ENCODE measurements at regions of chr17 and their contacts with region 1.

Region 1: DNA sequence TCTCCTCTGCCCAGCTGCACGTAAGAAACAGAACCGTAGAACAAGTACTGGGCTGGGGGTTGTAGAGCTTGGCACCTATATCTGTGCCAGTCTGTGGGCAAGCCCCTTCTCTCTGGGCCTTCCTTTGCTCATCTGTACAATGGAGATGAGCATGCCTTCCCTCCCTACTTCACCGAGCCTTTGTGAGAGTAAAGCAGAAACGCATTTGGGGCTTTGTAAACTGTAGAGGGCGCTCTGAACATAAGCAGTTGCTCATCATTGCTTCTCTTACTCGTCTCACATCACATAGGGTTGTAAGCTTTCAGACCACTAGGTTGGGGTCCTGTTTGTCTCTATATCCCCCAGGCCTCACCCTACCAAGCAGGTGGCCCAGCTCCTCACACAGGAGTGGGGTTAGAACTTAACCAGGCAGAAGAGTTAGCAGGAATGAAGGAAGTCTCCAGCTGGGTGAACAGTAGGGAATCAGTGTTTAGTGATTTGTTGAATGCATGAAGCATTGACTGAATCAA is 15.1 kb downstream of the SAMD14 start:
- DNase-seq: peak in 4 of 5 donors; percentile 30 to 50 (median 42)
- H3K4me3 ChIP-seq: no peak overlapping the region
- H3K4me3 Mint-ChIP-seq: no peak overlapping the region
- H3K27ac ChIP-seq: no peak overlapping the region
- H3K27ac Mint-ChIP-seq: peak overlapping the region in 1 of 7 donors; percentile 45
- H3K4me1 ChIP-seq: peaks cover 13% of the 10 kb centered on the region
- H3K4me1 Mint-ChIP-seq: peaks cover 7 to 16% (median 12%) of the 10 kb centered on the region in 4 donors
- H3K27me3 ChIP-seq: peaks cover 7% of the 10 kb centered on the region
- H3K27me3 Mint-ChIP-seq: peaks cover 14 to 20% of the 10 kb centered on the region in 2 donors

Region 2: DNA sequence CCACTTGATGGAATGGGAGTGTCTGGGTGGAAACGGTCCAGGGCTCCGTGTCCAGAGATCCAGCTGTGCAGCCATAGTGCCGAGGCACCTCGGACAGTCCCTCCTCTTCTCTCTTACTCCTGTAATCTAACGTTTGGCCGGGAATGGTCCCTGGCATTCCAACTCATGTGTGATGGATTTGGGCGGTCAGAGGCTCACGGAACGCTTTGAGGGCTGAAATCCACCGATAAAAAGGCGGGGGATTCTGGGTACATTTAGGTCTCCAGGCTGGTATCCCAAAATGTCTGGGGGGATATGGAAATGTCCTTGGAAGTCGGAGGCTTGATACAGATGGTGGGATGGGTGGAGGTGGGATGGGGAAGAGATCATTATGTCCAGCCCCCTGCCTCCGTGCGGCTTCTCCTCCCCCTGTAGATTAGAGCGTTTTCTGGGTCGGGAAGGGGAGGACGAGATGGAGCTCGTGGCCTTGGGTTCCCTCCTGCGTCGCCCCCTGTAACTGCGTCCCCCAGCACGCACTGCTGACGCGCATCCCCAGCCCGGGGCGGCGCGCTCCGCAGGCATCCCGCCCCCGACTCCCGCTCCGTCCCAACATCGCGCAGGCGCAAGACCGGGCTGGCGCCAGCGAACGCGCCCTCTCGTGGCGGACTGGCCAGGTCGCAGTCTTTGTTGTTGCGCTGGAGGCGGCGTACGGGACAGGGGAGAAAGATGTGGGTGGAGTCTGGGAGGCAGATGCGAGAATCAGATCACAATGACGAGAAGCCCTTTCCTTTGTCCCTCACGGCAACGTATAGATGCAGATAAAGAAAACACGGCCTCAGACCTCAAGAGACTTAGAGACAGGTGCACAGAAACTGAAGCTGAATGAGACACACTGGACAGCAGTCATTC is 46.4 kb after region 1 on chr17:
- CTCF ChIA-PET with region 1: interaction called, 36 read pairs
- POLR2A ChIA-PET with region 1: interaction called, 4 read pairs
- intact Hi-C with region 1: no loop called
- DNase-seq: peak; percentile 92 to 95 (median 93)
- H3K4me3 ChIP-seq: peak overlapping the region; percentile 76 to 78
- H3K4me3 Mint-ChIP-seq: peak overlapping the region; percentile 59 to 86 (median 74)
- H3K27ac ChIP-seq: peak overlapping the region; percentile 46
- H3K27ac Mint-ChIP-seq: peak overlapping the region; percentile 45 to 99 (median 93)
- H3K4me1 ChIP-seq: peaks cover 34% of the 10 kb centered on the region
- H3K4me1 Mint-ChIP-seq: peaks cover 23 to 53% (median 30%) of the 10 kb centered on the region in 4 donors
- H3K27me3 ChIP-seq: no peaks in the 10 kb centered on the region
- H3K27me3 Mint-ChIP-seq: no peaks in the 10 kb centered on the region